Gastrocnemius medialis (tissue), 4 donors: ENCODE measurements at regions of chr1 and their contacts with region 1.

Region 1: DNA sequence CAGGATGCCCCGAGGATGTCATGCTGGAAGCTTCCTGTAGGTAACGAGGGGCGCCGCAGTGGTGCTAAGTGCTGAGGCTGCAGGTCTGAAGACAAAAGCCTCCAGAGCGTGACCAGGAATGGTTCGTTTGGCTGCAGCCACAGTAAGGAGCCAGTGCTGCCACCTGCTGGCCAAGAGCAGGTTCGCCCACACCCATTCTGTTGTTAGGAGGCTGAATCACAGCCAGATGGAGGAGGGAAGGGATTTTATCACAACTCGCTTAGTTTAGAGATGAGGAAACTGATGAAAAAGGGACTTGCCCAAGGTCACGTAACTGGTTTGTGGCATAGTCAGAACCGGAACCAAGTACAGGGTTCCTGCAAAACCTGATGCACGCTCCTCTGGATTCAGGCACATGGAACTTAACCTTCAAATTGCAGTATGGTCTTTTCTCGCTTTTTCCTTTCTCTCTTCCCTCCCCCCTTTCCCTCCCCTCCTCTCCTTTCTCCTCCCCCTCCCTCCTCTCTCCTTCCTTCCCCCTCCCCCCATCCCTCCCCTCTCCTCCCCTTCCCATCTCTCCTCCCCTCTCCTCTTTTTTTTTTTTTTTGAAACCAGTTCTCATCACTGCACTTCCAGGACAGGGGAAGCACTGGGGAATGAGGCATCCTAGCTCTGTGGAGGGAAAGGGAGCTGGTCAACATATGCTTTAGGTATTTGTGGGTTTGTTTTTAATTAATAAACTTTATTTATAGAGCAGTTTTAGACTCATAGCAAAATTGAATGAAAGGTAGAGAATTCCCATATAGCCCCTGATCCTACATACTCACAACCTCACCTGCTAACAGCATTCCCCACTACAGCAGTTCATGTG is 81.8 kb downstream of the MPZL1 start:
- DNase-seq: peak; percentile 78 to 84
- ATAC-seq: peak; percentile 98 to 99
- H3K4me3 ChIP-seq: peak overlapping the region in 1 of 4 donors; percentile 17
- H3K27ac ChIP-seq: no peak overlapping the region
- H3K4me1 ChIP-seq: no peaks in the 10 kb centered on the region
- H3K27me3 ChIP-seq: no peaks in the 10 kb centered on the region
- CTCF ChIP-seq: peak; percentile 73 to 96 (median 87)
- POLR2A ChIP-seq: no peak

Region 2: GRCh38 chr1:167721617-167722151 is 81.9 kb before region 1 on chr1 and contains the start of gene MPZL1:
- in situ Hi-C with region 1: loop called in 3 of 4 experiments (anchors 5 kb)
- intact Hi-C with region 1: loop called (anchors 1 kb)
- DNase-seq: peak; percentile 95
- ATAC-seq: peak; percentile 96 to 97
- H3K4me3 ChIP-seq: peak within 1 kb of the TSS; percentile 73 to 93 (median 90)
- H3K27ac ChIP-seq: peak within 1 kb of the TSS; percentile 79 to 92 (median 87)
- H3K4me1 ChIP-seq: peaks cover 23 to 34% of the 10 kb centered on the region in 2 donors
- H3K27me3 ChIP-seq: no peaks in the 10 kb centered on the region
- CTCF ChIP-seq: no peak
- POLR2A ChIP-seq: peak; percentile 76 to 80
- total RNA-seq, gene MPZL1: 9.2 to 15.7 (median 11.7) TPM

Region 3: GRCh38 chr1:167837326-167837725 is 33.7 kb after region 1 on chr1:
- in situ Hi-C with region 1: no loop called
- intact Hi-C with region 1: no loop called
- DNase-seq: no peak
- ATAC-seq: no peak
- H3K4me3 ChIP-seq: no peak overlapping the region
- H3K27ac ChIP-seq: no peak overlapping the region
- H3K4me1 ChIP-seq: no peaks in the 10 kb centered on the region
- H3K27me3 ChIP-seq: no peaks in the 10 kb centered on the region
- CTCF ChIP-seq: no peak
- POLR2A ChIP-seq: no peak